Endothelial cell of umbilical vein (primary cell): ENCODE measurements at regions of chr5 and their contacts with region 1.

Region 1: GRCh38 chr5:103648086-103648485 is 85.5 kb upstream of the NUDT12 start:
- DNase-seq: no peak
- H3K4me3 ChIP-seq: no peak overlapping the region
- H3K27ac ChIP-seq: no peak overlapping the region
- H3K4me1 ChIP-seq: peaks cover 6% of the 10 kb centered on the region
- H3K27me3 ChIP-seq: no peaks in the 10 kb centered on the region
- CTCF ChIP-seq: no peak
- POLR2A ChIP-seq: no peak

Region 2: DNA sequence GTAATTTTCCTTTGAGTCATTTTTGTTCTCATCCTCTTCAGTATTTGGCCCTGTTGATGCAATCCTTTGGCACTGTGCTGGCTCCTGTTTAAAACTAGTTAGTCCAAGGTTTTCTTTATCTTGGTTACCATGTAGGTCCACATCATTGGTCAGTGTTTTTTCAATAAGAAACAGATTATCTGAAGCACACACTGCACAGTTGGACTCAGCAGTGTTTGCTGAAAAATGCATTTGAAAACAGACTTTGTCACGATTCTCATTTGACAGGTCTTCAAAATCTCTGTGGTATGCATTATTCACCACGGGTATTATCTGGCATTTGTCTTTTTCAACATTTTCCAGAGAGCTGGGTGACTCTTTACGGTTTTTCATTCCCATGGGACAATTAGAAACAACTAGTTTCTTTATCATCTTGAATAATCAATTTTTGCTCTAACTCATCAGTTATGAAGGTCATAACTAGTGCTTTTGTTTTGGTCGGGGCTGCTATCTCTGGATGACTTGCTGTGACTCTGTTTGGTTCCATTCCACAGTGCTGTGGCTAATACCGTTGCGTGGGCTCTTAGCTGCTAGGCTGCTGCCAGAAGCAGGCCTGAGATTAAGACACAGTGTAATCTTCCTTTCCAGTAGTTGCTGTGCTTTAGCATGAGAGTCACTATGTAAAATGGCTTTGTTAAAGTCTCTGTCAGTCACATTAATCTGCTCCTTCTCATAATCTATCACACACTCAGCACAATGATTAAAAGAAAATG is 121.7 kb before region 1 on chr5:
- CTCF ChIA-PET with region 1: no interaction called
- POLR2A ChIA-PET with region 1: no interaction called
- dilution Hi-C with region 1: no loop called
- intact Hi-C with region 1: no loop called
- DNase-seq: no peak
- H3K4me3 ChIP-seq: no peak overlapping the region
- H3K27ac ChIP-seq: no peak overlapping the region
- H3K4me1 ChIP-seq: no peaks in the 10 kb centered on the region
- H3K27me3 ChIP-seq: peaks cover 0 to 11% of the 10 kb centered on the region in 2 experiments
- CTCF ChIP-seq: no peak
- POLR2A ChIP-seq: no peak

Region 3: DNA sequence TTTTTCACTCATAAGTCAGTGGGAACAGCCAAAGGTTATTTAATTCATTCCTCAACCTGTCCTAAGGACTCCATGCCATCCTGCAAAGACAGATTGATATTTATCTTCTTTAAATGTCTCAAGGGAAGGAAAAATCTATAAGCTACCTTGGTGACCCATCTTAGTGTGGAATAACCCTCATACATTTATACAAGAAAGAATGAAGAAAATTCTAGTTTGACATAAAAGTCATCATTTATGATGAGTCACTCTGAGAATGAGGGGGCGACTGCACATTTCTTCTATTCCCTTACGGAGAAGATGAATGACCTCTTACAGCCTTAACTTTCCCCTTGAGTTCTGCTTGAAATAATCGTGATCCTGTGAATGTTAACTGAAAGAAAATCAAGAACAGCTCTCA is 58.7 kb before region 1 on chr5:
- CTCF ChIA-PET with region 1: interaction called, 6 read pairs
- POLR2A ChIA-PET with region 1: no interaction called
- dilution Hi-C with region 1: no loop called
- intact Hi-C with region 1: loop called (anchors 1 kb)
- DNase-seq: no peak
- H3K4me3 ChIP-seq: no peak overlapping the region
- H3K27ac ChIP-seq: no peak overlapping the region
- H3K4me1 ChIP-seq: no peaks in the 10 kb centered on the region
- H3K27me3 ChIP-seq: no peaks in the 10 kb centered on the region
- CTCF ChIP-seq: no peak
- POLR2A ChIP-seq: no peak

Region 4: DNA sequence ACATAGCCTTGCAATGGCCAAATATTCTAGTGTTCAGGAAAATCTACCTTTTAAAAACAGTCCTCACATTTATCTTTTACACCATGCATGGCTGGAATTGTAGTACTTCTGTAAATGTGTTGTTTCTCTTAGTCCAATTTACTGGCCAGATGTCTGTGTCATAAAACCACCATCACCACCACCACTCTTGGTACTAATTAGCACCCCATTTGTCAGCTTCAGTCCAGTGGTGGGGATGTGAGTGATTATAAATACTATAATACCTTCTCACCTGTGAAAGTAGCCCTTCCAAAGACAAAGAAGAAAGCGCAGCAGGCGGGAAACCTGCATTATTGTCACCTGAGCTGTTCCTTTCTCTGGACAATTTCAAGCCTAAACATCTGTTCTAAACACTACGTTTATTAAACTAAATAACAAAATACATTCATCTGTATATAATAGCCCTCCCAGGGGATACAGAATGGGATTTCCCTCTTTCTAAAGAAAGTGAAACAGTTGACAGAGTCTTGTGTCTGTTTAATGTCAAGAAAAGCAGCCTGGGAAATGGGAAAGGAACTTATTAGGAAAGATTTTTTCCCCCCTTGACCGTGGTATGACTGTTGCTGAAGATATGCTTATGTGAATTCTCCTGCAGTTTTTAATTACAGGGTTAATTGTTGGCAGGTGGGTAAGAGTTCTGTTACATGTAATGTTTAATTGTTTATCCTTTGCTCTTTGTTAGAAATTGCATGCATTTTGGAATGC is 59.0 kb after region 1 on chr5:
- CTCF ChIA-PET with region 1: no interaction called
- POLR2A ChIA-PET with region 1: no interaction called
- dilution Hi-C with region 1: no loop called
- intact Hi-C with region 1: no loop called
- DNase-seq: no peak
- H3K4me3 ChIP-seq: no peak overlapping the region
- H3K27ac ChIP-seq: no peak overlapping the region
- H3K4me1 ChIP-seq: no peaks in the 10 kb centered on the region
- H3K27me3 ChIP-seq: no peaks in the 10 kb centered on the region
- CTCF ChIP-seq: no peak
- POLR2A ChIP-seq: no peak